ENCODE measurements at regions of chr1 and their contacts with region 1.

Region 1: DNA sequence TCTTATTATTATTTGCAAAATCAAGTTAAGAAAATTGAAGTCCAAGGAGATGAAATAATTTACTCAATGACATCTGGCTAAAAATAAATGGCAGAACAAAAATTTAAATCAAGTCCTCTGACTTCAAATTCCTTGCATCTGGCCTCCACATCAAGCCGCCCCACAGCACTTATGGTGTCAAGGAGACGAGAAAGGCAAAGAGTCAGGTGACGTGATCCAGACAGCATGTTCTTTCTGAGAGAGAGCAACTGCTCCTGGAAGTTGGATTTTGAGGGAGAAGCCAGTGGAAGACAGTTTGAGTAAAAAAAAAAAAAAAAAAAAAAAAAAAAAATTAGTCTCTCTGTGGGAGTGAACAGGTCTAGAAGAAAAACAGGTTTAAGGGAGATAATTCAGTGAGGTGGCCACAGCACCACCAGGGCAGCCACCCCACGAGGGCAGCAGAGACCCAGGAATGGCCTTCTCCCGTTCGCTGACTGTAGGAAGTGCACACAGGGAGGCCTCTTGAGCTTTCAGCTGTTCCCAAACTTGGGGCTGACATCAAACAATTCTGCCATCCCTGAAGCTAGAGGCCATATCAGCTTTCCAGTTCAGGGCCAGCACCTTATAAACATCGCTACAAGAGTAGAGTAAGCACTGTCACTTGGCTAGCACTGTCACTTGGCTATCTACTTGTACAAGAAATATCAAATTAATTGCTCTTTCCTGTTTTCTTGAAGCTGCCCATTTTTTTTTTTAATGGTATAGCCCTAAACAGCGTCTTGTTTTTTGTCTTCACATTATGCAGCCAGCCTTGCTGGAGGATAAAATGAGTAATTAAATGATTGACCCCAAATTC is 7.8 kb downstream of the C1orf162 start:
- DNase-seq: peak; percentile 83
- H3K4me3 ChIP-seq: no peak overlapping the region
- H3K27ac ChIP-seq: peak overlapping the region; percentile 62
- H3K4me1 ChIP-seq: peaks cover 50% of the 10 kb centered on the region
- H3K27me3 ChIP-seq: no peaks in the 10 kb centered on the region
- CTCF ChIP-seq: peak; percentile 81

Region 2: GRCh38 chr1:111448918-111449702 is 32.5 kb before region 1 on chr1 and contains the starts of genes ATP5PB and WDR77:
- intact Hi-C with region 1: no loop called
- DNase-seq: peak; percentile 92
- H3K4me3 ChIP-seq: peak within 1 kb of the TSS; percentile 95
- H3K27ac ChIP-seq: peak within 1 kb of the TSS; percentile 94
- H3K4me1 ChIP-seq: peaks cover 70% of the 10 kb centered on the region
- H3K27me3 ChIP-seq: no peaks in the 10 kb centered on the region
- CTCF ChIP-seq: no peak
- total RNA-seq, gene ATP5PB: 671 TPM
- total RNA-seq, gene WDR77: 30.7 TPM

Region 3: DNA sequence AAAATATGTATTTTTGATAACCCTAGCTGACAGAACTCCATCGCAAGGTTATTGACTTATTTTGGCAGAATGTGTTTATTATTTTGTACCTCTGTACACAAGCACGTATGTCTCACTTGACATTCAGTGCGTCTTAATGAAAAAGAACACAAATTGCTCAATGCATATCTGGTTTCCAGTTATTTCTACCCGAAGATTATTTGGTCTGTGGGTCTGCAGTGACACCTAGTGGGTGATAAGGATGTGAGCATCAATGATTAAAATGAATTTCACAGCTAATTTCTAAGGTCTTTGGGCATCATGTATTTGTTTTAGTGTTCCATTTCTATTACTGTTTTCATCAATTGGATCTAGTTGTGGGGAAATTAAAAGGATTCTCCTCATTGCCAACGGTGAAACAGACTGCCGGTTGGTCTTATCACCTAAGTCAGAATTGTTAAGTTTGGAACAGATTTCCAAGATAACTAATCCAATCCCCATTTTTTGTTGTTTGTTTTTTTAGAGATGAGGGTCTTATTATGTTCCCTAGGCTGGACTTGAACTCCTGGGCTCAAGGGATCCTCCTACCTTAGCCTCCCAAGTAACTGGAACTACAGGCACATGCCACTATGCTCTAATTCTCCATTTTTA is 288.0 kb after region 1 on chr1:
- intact Hi-C with region 1: loop called (anchors 10 kb)
- DNase-seq: no peak
- H3K4me3 ChIP-seq: no peak overlapping the region
- H3K27ac ChIP-seq: peak overlapping the region; percentile 7
- H3K4me1 ChIP-seq: peaks cover 5% of the 10 kb centered on the region
- H3K27me3 ChIP-seq: no peaks in the 10 kb centered on the region
- CTCF ChIP-seq: peak; percentile 90

Measured in left ventricle myocardium inferior (tissue), 1 donor.